ENCODE measurements at regions of chr6 and their contacts with region 1.

Region 1: DNA sequence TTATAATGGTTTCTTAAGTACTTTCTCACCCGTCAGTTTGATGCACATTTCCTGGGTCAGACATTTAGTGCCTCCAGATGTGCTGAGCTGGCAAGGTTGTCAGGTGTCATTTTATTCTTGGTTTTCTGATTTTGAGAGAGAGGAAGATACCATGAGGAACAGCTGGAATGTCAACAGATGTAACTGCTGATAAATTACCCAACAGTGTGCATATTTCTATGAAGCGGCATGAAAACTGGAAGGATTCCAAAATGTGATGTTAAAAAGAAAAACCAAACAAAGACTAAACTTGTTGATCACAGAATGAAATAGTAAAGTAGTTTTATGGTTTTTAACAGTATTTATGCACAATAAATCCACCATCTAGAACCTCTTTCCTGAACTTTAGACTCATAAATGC is 447.3 kb downstream of the HDGFL1 start:
- DNase-seq: no peak
- H3K4me3 ChIP-seq: no peak overlapping the region
- H3K27ac ChIP-seq: no peak overlapping the region
- H3K4me1 ChIP-seq: no peaks in the 10 kb centered on the region
- H3K27me3 ChIP-seq: no peaks in the 10 kb centered on the region
- CTCF ChIP-seq: no peak
- POLR2A ChIP-seq: no peak

Region 2: GRCh38 chr6:23154159-23154558 is 137.5 kb after region 1 on chr6:
- intact Hi-C with region 1: loop called (anchors 5 kb)
- DNase-seq: no peak
- H3K4me3 ChIP-seq: no peak overlapping the region
- H3K27ac ChIP-seq: no peak overlapping the region
- H3K4me1 ChIP-seq: no peaks in the 10 kb centered on the region
- H3K27me3 ChIP-seq: no peaks in the 10 kb centered on the region
- CTCF ChIP-seq: no peak
- POLR2A ChIP-seq: no peak

Measured in breast epithelium (tissue), 4 donors.